K562 (cell line): ENCODE measurements at regions of chrX and their contacts with region 1.

Region 1: GRCh38 chrX:110317820-110318658 is at the start of gene AMMECR1:
- DNase-seq: peak; percentile 86 to 91 (median 88)
- ATAC-seq: peak; percentile 75
- H3K4me3 ChIP-seq: peak within 1 kb of the TSS; percentile 95
- H3K27ac ChIP-seq: peak within 1 kb of the TSS; percentile 91
- H3K4me1 ChIP-seq: peaks cover 3 to 30% of the 10 kb centered on the region in 2 experiments; a peak in 2 of 5 replicates
- H3K27me3 ChIP-seq: no peaks in the 10 kb centered on the region
- CTCF ChIP-seq: peak in 1 of 3 experiments; percentile 18; a peak in 2 of 6 replicates
- EP300 ChIP-seq: no peak
- POLR2A ChIP-seq: peak; percentile 85
- RAD21 ChIP-seq: no peak
- polyA plus RNA-seq, gene AMMECR1: 13.9 to 16.1 TPM

Region 2: GRCh38 chrX:109448282-109448938 is 869.6 kb before region 1 on chrX:
- CTCF ChIA-PET with region 1: no interaction called
- POLR2A ChIA-PET with region 1: no interaction called
- in situ Hi-C with region 1: no loop called
- intact Hi-C with region 1: no loop called
- DNase-seq: no peak
- ATAC-seq: no peak
- H3K4me3 ChIP-seq: no peak overlapping the region
- H3K27ac ChIP-seq: no peak overlapping the region
- H3K4me1 ChIP-seq: no peaks in the 10 kb centered on the region
- H3K27me3 ChIP-seq: no peaks in the 10 kb centered on the region
- CTCF ChIP-seq: no peak
- EP300 ChIP-seq: no peak
- POLR2A ChIP-seq: no peak
- RAD21 ChIP-seq: no peak

Region 3: DNA sequence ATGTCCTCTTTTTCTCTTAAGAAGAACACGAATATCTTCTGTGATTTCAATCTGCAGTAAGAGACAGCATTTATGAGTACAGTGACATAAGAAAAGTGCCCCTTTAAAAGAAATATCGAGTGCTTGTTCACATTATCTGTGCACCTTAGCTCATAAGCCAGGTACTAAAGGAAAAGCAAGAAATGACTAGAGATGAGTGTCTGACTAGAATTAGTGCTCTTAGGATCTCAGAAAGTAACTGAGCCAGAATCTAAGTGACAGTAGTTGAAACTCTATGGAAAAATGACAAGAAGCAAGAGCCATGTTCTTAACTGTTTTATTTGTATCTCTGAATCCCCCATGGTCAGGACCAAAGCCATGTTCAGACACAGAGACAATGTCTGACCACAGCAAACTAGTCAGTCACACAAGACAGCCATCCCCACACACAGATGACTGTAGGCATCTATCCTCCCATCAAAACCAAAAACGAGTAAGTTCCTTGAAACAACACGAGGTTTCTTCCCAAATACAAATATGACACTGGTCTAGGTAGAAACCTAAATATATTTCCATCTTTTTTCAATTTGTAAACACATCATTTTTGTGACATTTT is 621.8 kb before region 1 on chrX:
- CTCF ChIA-PET with region 1: no interaction called
- POLR2A ChIA-PET with region 1: no interaction called
- in situ Hi-C with region 1: no loop called
- intact Hi-C with region 1: no loop called
- DNase-seq: no peak
- ATAC-seq: no peak
- H3K4me3 ChIP-seq: no peak overlapping the region
- H3K27ac ChIP-seq: no peak overlapping the region
- H3K4me1 ChIP-seq: no peaks in the 10 kb centered on the region
- H3K27me3 ChIP-seq: no peaks in the 10 kb centered on the region
- CTCF ChIP-seq: no peak
- EP300 ChIP-seq: no peak
- POLR2A ChIP-seq: no peak
- RAD21 ChIP-seq: no peak

Region 4: DNA sequence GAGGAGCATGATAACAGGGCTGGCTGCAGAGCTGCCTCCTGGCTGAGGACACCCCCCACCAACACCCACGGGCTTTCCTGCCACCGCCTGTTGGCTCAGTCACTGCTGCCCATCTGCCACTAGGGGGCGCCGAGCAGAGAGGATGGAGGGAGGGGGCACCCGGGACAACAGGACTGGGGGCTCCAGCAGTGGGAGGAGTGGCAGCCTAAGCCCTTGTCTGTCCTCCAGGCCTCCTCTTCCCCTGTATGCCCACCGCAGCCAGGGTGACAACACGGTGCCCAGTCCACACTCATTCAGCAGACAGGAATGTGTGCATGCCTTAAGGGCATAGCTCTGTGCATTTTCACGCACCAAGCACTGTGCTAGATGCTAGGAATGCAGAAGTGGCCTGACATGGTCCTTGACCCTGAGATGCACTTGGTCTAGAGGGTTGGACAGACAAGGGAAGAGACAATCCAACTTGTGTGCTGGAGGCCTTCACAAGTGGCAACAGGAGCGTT is 150.0 kb before region 1 on chrX:
- CTCF ChIA-PET with region 1: no interaction called
- POLR2A ChIA-PET with region 1: interaction called, 3 read pairs
- in situ Hi-C with region 1: no loop called
- intact Hi-C with region 1: loop called (anchors 2 kb)
- DNase-seq: peak; percentile 74 to 77 (median 75)
- ATAC-seq: peak; percentile 94
- H3K4me3 ChIP-seq: no peak overlapping the region
- H3K27ac ChIP-seq: no peak overlapping the region; the same call in 2 of the 3 replicates
- H3K4me1 ChIP-seq: peaks cover 7 to 16% of the 10 kb centered on the region in 2 experiments; a peak in 4 of 5 replicates
- H3K27me3 ChIP-seq: no peaks in the 10 kb centered on the region
- CTCF ChIP-seq: peak; percentile 62 to 84 (median 69)
- EP300 ChIP-seq: no peak
- POLR2A ChIP-seq: no peak
- RAD21 ChIP-seq: peak; percentile 36 to 63

Region 5: GRCh38 chrX:110178179-110178865 is 139.7 kb before region 1 on chrX:
- CTCF ChIA-PET with region 1: no interaction called
- POLR2A ChIA-PET with region 1: interaction called, 5 read pairs
- in situ Hi-C with region 1: no loop called
- intact Hi-C with region 1: loop called (anchors 5 kb)
- DNase-seq: peak; percentile 39 to 95 (median 63)
- ATAC-seq: peak; percentile 86
- H3K4me3 ChIP-seq: no peak overlapping the region
- H3K27ac ChIP-seq: peak overlapping the region; percentile 94
- H3K4me1 ChIP-seq: peaks cover 24 to 46% of the 10 kb centered on the region in 2 experiments
- H3K27me3 ChIP-seq: no peaks in the 10 kb centered on the region
- CTCF ChIP-seq: 0 out of 6 replicates have a peak, but pooled peaks of 1 of the 3 experiments have one; percentile 7
- EP300 ChIP-seq: peak; percentile 93
- POLR2A ChIP-seq: no peak
- RAD21 ChIP-seq: 0 out of 4 replicates have a peak, but pooled peaks of 1 of the 2 experiments have one; percentile 2

Region 6: GRCh38 chrX:110216027-110216426 is 102.0 kb before region 1 on chrX:
- CTCF ChIA-PET with region 1: no interaction called
- POLR2A ChIA-PET with region 1: no interaction called
- in situ Hi-C with region 1: no loop called
- intact Hi-C with region 1: no loop called
- DNase-seq: no peak
- ATAC-seq: no peak
- H3K4me3 ChIP-seq: no peak overlapping the region
- H3K27ac ChIP-seq: no peak overlapping the region
- H3K4me1 ChIP-seq: no peaks in the 10 kb centered on the region; a peak in 1 of 5 replicates
- H3K27me3 ChIP-seq: no peaks in the 10 kb centered on the region
- CTCF ChIP-seq: no peak
- EP300 ChIP-seq: no peak
- POLR2A ChIP-seq: no peak
- RAD21 ChIP-seq: no peak

Region 7: GRCh38 chrX:110226931-110227330 is 91.1 kb before region 1 on chrX:
- CTCF ChIA-PET with region 1: no interaction called
- POLR2A ChIA-PET with region 1: interaction called, 4 read pairs
- in situ Hi-C with region 1: no loop called
- intact Hi-C with region 1: loop called (anchors 5 kb)
- DNase-seq: no peak
- ATAC-seq: no peak
- H3K4me3 ChIP-seq: no peak overlapping the region
- H3K27ac ChIP-seq: no peak overlapping the region
- H3K4me1 ChIP-seq: peaks cover 0 to 11% of the 10 kb centered on the region in 2 experiments; a peak in 3 of 5 replicates
- H3K27me3 ChIP-seq: no peaks in the 10 kb centered on the region
- CTCF ChIP-seq: no peak
- EP300 ChIP-seq: no peak
- POLR2A ChIP-seq: no peak
- RAD21 ChIP-seq: no peak

Region 8: GRCh38 chrX:110402479-110403230 is 84.6 kb after region 1 on chrX:
- CTCF ChIA-PET with region 1: no interaction called
- POLR2A ChIA-PET with region 1: interaction called, 3 read pairs
- in situ Hi-C with region 1: loop called (anchors 10 kb)
- intact Hi-C with region 1: loop called (anchors 2 kb)
- DNase-seq: peak; percentile 58 to 89 (median 68)
- ATAC-seq: peak; percentile 82
- H3K4me3 ChIP-seq: no peak overlapping the region
- H3K27ac ChIP-seq: peak overlapping the region; percentile 63
- H3K4me1 ChIP-seq: peaks cover 12 to 46% of the 10 kb centered on the region in 2 experiments; a peak in 4 of 5 replicates
- H3K27me3 ChIP-seq: no peaks in the 10 kb centered on the region
- CTCF ChIP-seq: no peak
- EP300 ChIP-seq: peak; percentile 46; the same call in 1 of the 2 replicates
- POLR2A ChIP-seq: no peak
- RAD21 ChIP-seq: no peak